ENCODE measurements at regions of chr22 and their contacts with region 1.

Region 1: DNA sequence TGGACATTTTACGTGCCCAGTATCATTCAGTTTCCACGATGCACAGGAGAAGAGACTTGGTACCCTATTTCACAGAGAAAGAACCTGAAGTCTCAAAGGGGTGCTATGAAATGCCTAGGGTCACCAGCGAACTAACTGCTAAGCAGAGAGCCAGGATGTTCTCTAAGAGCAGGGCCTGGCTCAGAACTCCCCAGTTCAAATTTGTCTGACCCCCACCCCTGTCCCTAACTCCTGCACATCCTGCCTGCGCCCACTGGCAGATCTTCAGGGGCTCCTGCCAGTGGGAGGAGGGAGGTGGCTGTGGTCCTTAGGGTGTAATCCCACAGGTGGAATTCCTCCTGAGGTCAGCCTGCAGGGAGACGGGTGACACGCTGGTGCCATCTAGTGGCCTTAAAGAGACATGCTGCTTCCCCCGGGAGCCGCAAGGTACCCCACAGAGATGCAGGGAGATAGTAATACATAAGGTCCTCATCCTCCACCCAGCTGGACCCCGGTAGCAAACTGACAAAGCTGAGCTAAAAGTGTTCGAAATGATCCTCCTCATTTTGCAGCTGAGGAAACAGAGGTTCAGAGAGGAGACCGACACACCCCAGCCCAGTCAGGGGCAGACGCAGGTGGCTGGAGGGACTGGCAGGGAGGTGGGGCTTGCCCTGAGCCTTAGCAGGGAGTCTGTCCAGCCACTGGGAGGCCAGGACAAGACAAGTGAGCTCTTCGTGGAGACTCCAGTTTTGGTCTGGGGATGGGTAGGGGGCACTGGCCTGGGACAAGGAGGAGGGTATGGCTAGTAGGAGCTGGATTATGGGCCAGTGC is 34.1 kb downstream of the MB start:
- DNase-seq: peak; percentile 71 to 77
- H3K4me3 ChIP-seq: no peak overlapping the region
- H3K4me3 Mint-ChIP-seq: no peak overlapping the region
- H3K27ac Mint-ChIP-seq: no peak overlapping the region
- H3K4me1 ChIP-seq: no peaks in the 10 kb centered on the region
- H3K4me1 Mint-ChIP-seq: peaks cover 4% of the 10 kb centered on the region
- H3K27me3 ChIP-seq: no peaks in the 10 kb centered on the region
- H3K27me3 Mint-ChIP-seq: no peaks in the 10 kb centered on the region
- CTCF ChIP-seq: peak; percentile 91 to 92

Region 2: GRCh38 chr22:35430897-35431322 is 152.2 kb before region 1 on chr22:
- CTCF ChIA-PET with region 1: interaction called, 14 read pairs
- POLR2A ChIA-PET with region 1: no interaction called
- intact Hi-C with region 1: loop called (anchors 1 kb)
- DNase-seq: peak; percentile 73 to 91
- H3K4me3 ChIP-seq: no peak overlapping the region
- H3K4me3 Mint-ChIP-seq: no peak overlapping the region
- H3K27ac Mint-ChIP-seq: no peak overlapping the region
- H3K4me1 ChIP-seq: no peaks in the 10 kb centered on the region
- H3K4me1 Mint-ChIP-seq: no peaks in the 10 kb centered on the region
- H3K27me3 ChIP-seq: no peaks in the 10 kb centered on the region
- H3K27me3 Mint-ChIP-seq: no peaks in the 10 kb centered on the region
- CTCF ChIP-seq: peak; percentile 86 to 91

Region 3: GRCh38 chr22:35489239-35489638 is 93.8 kb before region 1 on chr22:
- CTCF ChIA-PET with region 1: no interaction called
- POLR2A ChIA-PET with region 1: no interaction called
- intact Hi-C with region 1: no loop called
- DNase-seq: no peak
- H3K4me3 ChIP-seq: no peak overlapping the region
- H3K4me3 Mint-ChIP-seq: no peak overlapping the region
- H3K27ac Mint-ChIP-seq: no peak overlapping the region
- H3K4me1 ChIP-seq: no peaks in the 10 kb centered on the region
- H3K4me1 Mint-ChIP-seq: no peaks in the 10 kb centered on the region
- H3K27me3 ChIP-seq: no peaks in the 10 kb centered on the region; the same call in none of the 2 replicates
- H3K27me3 Mint-ChIP-seq: peaks cover 11% of the 10 kb centered on the region
- CTCF ChIP-seq: no peak

Region 4: GRCh38 chr22:35539910-35540594 is 43.0 kb before region 1 on chr22:
- CTCF ChIA-PET with region 1: interaction called, 3 read pairs
- POLR2A ChIA-PET with region 1: no interaction called
- intact Hi-C with region 1: loop called (anchors 5 kb)
- DNase-seq: peak in 1 of 2 experiments; percentile 73
- H3K4me3 ChIP-seq: peak overlapping the region; percentile 57
- H3K4me3 Mint-ChIP-seq: peak overlapping the region; percentile 69
- H3K27ac Mint-ChIP-seq: no peak overlapping the region
- H3K4me1 ChIP-seq: peaks cover 5% of the 10 kb centered on the region
- H3K4me1 Mint-ChIP-seq: no peaks in the 10 kb centered on the region
- H3K27me3 ChIP-seq: peaks cover 1% of the 10 kb centered on the region; the same call in 1 of the 2 replicates
- H3K27me3 Mint-ChIP-seq: peaks cover 13% of the 10 kb centered on the region
- CTCF ChIP-seq: no peak

Measured in Caco-2 (cell line).